SK-N-SH (cell line): ENCODE measurements at regions of chr16 and their contacts with region 1.

Region 1: DNA sequence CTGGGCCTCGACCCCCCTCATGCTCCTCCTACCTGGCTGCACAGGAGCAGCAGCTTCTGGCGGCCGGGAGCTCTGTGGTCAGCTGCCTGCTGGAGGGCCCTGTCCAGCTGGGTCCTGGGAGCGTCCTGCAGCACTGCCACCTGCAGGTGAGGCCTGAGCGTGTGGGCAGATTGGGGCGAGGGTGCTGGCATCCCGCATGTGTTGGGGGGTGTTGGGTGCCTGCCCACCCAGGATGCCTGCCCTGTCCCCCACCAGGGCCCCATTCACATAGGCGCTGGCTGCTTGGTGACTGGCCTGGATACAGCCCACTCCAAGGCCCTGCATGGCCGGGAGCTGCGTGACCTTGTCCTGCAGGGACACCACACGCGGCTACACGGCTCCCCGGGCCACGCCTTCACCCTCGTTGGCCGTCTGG is 16.5 kb downstream of the FCSK start:
- DNase-seq: peak; percentile 87
- H3K4me3 ChIP-seq: no peak overlapping the region
- H3K27ac ChIP-seq: no peak overlapping the region
- H3K4me1 ChIP-seq: peaks cover 0 to 9% of the 10 kb centered on the region in 2 experiments; a peak in 1 of 4 replicates
- H3K27me3 ChIP-seq: no peaks in the 10 kb centered on the region
- CTCF ChIP-seq: peak; percentile 49
- EP300 ChIP-seq: no peak
- RAD21 ChIP-seq: peak; percentile 70

Region 2: DNA sequence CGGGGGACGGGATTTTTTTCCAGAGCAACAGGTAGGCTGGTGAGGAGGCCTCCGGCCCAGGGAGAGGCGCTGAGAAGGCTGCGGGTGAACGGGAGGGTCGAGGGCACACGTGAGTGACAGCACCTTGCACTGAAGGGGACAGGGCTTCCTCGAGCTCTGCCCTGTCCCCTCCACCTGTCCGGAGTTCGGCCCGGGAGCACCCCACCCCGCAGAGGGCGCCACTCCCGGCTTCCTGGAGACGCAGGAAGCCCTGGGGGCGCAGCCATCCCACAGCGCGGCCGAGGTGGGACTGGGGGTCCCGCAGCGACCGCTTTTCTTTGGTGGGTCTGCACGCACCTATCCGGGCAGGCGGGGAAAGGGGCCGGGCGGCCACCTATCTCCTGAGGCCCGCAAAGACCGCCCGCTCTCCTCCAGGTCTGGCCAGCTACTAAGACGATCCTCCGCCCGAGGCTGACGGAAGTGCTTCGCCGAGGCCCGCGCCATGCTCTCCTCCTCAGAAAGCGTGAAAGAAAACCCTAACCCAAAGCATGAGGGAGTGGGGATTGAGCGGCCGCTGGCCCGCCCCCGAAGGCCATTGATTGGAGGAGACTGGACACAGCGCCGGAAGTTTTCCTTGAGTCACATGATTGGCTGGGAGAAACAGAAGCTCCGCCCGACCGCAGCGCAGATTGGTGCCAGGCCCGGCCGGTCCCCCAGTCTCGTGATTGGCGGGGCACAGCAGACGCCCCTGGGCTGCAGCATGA is 89.9 kb before region 1 on chr16:
- CTCF ChIA-PET with region 1: interaction called, 15 read pairs
- POLR2A ChIA-PET with region 1: interaction called, 11 read pairs
- DNase-seq: peak; percentile 97
- H3K4me3 ChIP-seq: peak overlapping the region; percentile 65 to 72
- H3K27ac ChIP-seq: peak overlapping the region; percentile 77 to 85
- H3K4me1 ChIP-seq: peaks cover 6 to 8% of the 10 kb centered on the region in 2 experiments; a peak in 2 of 4 replicates
- H3K27me3 ChIP-seq: no peaks in the 10 kb centered on the region
- CTCF ChIP-seq: peak; percentile 49
- EP300 ChIP-seq: no peak
- RAD21 ChIP-seq: no peak

Region 3: GRCh38 chr16:70395345-70395901 is 75.5 kb before region 1 on chr16:
- CTCF ChIA-PET with region 1: interaction called, 25 read pairs
- POLR2A ChIA-PET with region 1: no interaction called
- DNase-seq: peak; percentile 83
- H3K4me3 ChIP-seq: peak overlapping the region in 1 of 2 experiments; percentile 29; a peak in 1 of 4 replicates
- H3K27ac ChIP-seq: no peak overlapping the region; a peak in 1 of 4 replicates
- H3K4me1 ChIP-seq: peaks cover 0 to 15% of the 10 kb centered on the region in 2 experiments; a peak in 1 of 4 replicates
- H3K27me3 ChIP-seq: no peaks in the 10 kb centered on the region
- CTCF ChIP-seq: peak; percentile 76
- EP300 ChIP-seq: no peak
- RAD21 ChIP-seq: peak; percentile 76

Region 4: DNA sequence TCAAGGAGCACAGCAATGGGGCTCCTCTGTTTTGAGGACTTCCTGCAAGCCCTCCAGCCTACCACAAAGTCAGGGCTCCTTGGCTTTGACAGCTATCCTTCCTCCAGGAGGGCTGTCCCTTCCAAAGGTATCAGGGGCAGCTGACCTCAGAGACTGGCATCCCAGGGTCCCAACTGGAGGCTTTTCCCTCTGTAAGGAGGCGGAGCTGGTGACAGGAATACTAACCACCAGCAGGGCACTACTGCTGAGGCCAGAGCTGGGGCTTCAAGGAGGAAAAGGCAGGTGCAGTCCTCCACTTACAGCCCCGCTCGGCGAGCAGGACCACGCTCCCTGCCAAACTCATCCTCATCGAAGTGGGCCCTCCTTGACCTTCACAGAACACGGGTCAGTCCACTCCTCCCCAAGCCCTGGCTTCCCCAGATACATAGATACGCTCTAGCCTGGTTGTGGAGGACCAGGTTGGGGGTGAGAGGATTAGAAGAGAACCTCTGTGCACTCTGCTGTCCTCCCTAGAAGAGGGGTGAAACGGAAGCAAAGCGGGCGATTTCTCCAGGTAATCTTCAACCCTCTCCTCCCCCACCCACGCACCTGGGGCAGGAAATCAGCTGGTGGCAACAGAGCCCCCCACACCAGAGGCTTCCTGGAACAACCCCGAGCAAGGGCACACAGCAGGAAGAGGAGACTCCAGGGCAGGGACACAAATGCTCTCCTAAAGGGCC is 52.5 kb before region 1 on chr16:
- CTCF ChIA-PET with region 1: no interaction called
- POLR2A ChIA-PET with region 1: no interaction called
- DNase-seq: no peak
- H3K4me3 ChIP-seq: no peak overlapping the region
- H3K27ac ChIP-seq: no peak overlapping the region; a peak in 1 of 4 replicates
- H3K4me1 ChIP-seq: peaks cover 0 to 26% of the 10 kb centered on the region in 2 experiments; a peak in 2 of 4 replicates
- H3K27me3 ChIP-seq: no peaks in the 10 kb centered on the region
- CTCF ChIP-seq: no peak
- EP300 ChIP-seq: no peak
- RAD21 ChIP-seq: no peak

Region 5: DNA sequence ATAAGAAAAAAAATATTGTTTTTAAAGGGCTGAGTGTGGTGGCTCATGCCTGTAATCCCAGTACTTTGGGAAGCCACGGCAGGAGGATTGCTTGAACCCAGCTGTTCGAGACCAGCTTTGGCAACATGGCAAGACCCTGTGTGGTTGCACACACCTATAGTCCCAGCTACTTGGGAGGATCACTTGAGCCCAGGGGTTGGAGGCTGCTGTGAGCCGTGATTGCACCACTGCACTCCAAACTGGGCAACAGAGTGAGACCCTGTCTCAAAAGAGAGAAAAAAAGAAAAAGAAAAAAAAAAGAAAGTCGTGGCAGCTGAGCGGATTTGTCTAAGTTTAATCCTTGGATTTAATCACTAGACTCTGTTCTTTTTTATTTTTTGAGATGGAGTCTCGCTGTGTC is 22.9 kb before region 1 on chr16:
- CTCF ChIA-PET with region 1: no interaction called
- POLR2A ChIA-PET with region 1: no interaction called
- DNase-seq: no peak
- H3K4me3 ChIP-seq: no peak overlapping the region
- H3K27ac ChIP-seq: no peak overlapping the region
- H3K4me1 ChIP-seq: no peaks in the 10 kb centered on the region
- H3K27me3 ChIP-seq: no peaks in the 10 kb centered on the region
- CTCF ChIP-seq: no peak
- EP300 ChIP-seq: no peak
- RAD21 ChIP-seq: no peak

Region 6: GRCh38 chr16:70460737-70461261 is 10.1 kb before region 1 on chr16:
- CTCF ChIA-PET with region 1: interaction called, 12 read pairs
- POLR2A ChIA-PET with region 1: no interaction called
- DNase-seq: peak; percentile 65
- H3K4me3 ChIP-seq: no peak overlapping the region
- H3K27ac ChIP-seq: no peak overlapping the region
- H3K4me1 ChIP-seq: peaks cover 0 to 7% of the 10 kb centered on the region in 2 experiments; a peak in 1 of 4 replicates
- H3K27me3 ChIP-seq: no peaks in the 10 kb centered on the region
- CTCF ChIP-seq: no peak
- EP300 ChIP-seq: no peak
- RAD21 ChIP-seq: no peak

Region 7: GRCh38 chr16:70490261-70490803 is 19.4 kb after region 1 on chr16:
- CTCF ChIA-PET with region 1: interaction called, 14 read pairs
- POLR2A ChIA-PET with region 1: no interaction called
- DNase-seq: no peak
- H3K4me3 ChIP-seq: no peak overlapping the region
- H3K27ac ChIP-seq: no peak overlapping the region
- H3K4me1 ChIP-seq: no peaks in the 10 kb centered on the region
- H3K27me3 ChIP-seq: no peaks in the 10 kb centered on the region
- CTCF ChIP-seq: no peak
- EP300 ChIP-seq: no peak
- RAD21 ChIP-seq: no peak